A549 (cell line): ENCODE measurements at regions of chr12 and their contacts with region 1.

Region 1: DNA sequence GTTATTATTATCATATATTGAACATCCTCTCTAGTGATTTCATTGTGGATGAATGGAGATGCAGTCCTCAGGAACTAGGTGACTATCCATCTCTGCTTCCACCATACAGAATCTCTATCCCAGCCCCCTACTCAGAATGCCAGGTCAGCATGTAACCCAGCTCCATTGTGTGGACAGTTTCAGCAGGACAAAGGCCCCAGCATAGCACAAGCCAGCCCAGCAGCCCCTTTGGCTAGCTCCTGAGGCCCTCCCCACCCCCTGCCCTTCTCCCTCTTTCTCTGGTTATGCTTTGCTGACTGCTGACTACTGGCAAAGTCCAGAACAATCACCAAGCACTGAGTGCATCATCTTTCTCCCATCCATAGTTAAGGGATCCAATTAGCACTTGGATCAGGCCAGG is 5.8 kb upstream of the SPRYD4 start:
- DNase-seq: no peak
- ATAC-seq: no peak
- H3K4me3 ChIP-seq: no peak overlapping the region
- H3K27ac ChIP-seq: no peak overlapping the region
- H3K4me1 ChIP-seq: peaks cover 3% of the 10 kb centered on the region; the same call in 1 of the 3 replicates
- CTCF ChIP-seq: no peak
- EP300 ChIP-seq: no peak
- POLR2A ChIP-seq: no peak
- RAD21 ChIP-seq: no peak

Region 2: DNA sequence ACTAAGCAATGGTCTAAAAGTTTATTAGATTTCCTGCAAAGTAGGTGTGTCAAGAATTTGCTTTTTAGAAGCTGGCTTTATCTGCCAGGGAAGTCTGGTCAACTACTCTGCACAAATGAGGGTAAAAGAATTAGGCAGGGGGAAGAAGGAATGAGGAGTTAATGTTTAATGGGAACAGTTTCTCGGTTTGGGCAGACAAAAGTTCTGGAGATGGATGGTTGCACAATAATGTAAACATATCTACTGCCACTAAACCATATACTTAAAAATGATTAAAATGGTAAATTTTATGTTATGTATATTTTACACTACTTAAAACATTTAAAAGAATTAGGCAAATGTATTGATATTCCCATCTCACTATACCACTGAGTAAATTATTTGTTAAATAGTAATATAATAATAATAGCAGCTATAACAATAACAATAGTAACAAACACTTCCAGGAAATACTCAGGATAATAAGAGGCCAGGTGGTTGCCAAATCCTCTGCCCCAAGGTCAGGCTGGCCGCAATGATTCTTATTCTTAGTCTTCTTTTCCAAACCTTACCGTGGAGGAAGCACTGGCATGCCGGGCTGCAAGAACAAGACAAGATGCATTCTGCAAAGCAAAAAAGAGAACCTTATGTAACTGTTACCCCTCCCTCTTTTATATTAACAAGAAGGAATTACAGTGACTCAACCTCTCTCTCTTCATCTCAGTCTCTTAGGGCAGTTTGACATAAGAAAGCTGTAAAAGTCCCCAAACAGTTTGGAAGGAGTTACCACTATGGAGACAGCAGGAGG is 176.3 kb before region 1 on chr12:
- CTCF ChIA-PET with region 1: interaction called, 11 read pairs
- POLR2A ChIA-PET with region 1: no interaction called
- DNase-seq: no peak
- ATAC-seq: peak; percentile 37 to 42; a peak in 5 of 6 replicates
- H3K4me3 ChIP-seq: 0 out of 3 replicates have a peak overlapping the region, but pooled peaks have one; percentile 1
- H3K27ac ChIP-seq: peak overlapping the region; percentile 48 to 70; a peak in 4 of 6 replicates
- H3K4me1 ChIP-seq: peaks cover 32% of the 10 kb centered on the region
- CTCF ChIP-seq: no peak
- EP300 ChIP-seq: no peak
- POLR2A ChIP-seq: no peak
- RAD21 ChIP-seq: no peak

Region 3: GRCh38 chr12:56448860-56449621 is 13.5 kb before region 1 on chr12 and contains the start of gene TIMELESS:
- CTCF ChIA-PET with region 1: interaction called, 34 read pairs
- POLR2A ChIA-PET with region 1: interaction called, 9 read pairs
- DNase-seq: peak; percentile 93 to 99
- ATAC-seq: peak; percentile 97 to 98
- H3K4me3 ChIP-seq: peak within 1 kb of the TSS; percentile 59
- H3K27ac ChIP-seq: peak within 1 kb of the TSS; percentile 84 to 92
- H3K4me1 ChIP-seq: peaks cover 9% of the 10 kb centered on the region
- CTCF ChIP-seq: no peak
- EP300 ChIP-seq: no peak
- POLR2A ChIP-seq: peak; percentile 87
- RAD21 ChIP-seq: no peak
- polyA plus RNA-seq, gene TIMELESS: 17.6 and 34.3 TPM in 2 replicates